ENCODE measurements at regions of chr14 and their contacts with region 1.

Region 1: DNA sequence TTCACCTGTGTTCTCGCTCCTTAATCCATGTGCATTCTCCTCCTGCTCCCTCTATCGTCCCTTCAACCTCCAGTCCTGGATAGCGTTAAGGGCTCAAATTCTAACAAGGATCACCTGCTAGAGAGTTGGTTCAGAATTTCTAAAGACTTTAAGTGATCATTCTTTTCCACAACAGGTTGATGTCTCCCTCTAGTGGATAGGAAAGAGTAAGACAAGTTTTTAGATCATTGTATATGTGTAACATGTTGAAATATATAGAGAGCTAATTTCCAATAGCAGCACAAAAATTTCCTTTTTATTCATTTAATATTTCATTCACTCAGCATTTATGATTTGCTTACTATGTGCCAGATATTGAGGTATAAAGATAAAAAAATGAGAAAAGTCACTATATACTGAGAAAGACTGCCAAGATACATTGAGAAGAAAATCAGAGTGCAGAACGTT is 9.3 kb upstream of the ESR2 start:
- DNase-seq: peak; percentile 70
- ATAC-seq: peak; percentile 69
- H3K4me3 ChIP-seq: no peak overlapping the region
- H3K4me3 Mint-ChIP-seq: no peak overlapping the region
- H3K27ac ChIP-seq: no peak overlapping the region
- H3K27ac Mint-ChIP-seq: no peak overlapping the region
- H3K4me1 ChIP-seq: no peaks in the 10 kb centered on the region
- H3K4me1 Mint-ChIP-seq: peaks cover 2% of the 10 kb centered on the region
- H3K27me3 ChIP-seq: no peaks in the 10 kb centered on the region
- H3K27me3 Mint-ChIP-seq: no peaks in the 10 kb centered on the region
- CTCF ChIP-seq: peak; percentile 94

Region 2: DNA sequence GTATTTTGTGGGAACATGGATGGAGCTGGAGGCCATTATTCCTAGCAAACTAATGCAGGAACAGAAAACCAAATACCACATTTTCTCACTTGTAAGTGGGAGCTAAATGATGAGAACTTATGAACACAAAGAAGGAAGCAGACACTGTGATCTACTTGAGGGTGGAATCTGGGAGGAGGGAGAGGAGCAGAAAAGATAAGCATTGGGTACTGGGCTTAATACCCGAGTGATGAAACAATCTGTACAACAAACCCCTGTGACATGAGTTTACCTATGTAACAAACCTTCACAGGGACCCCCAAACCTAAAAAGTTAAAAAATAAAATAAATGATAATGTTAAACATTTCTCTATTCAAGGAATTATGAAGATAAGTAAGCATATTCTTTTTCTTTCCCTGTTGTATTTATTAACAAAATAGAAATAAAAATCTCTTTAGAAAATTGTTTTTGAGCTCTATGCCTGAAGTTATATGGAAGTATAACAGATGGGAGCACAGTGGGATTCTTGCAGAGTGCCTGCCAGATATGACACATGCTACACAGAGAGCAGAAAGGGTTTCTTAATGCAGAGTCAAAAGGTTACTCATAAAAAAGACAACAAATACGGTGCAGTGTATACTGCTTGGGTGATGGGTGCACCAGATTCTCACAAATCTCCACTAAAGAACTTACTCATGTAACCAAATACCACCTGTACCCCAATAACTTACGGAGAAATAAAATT is 502.7 kb before region 1 on chr14:
- CTCF ChIA-PET with region 1: interaction called, 45 read pairs
- POLR2A ChIA-PET with region 1: no interaction called
- intact Hi-C with region 1: loop called (anchors 1 kb)
- DNase-seq: no peak
- ATAC-seq: no peak
- H3K4me3 ChIP-seq: no peak overlapping the region
- H3K4me3 Mint-ChIP-seq: no peak overlapping the region
- H3K27ac ChIP-seq: no peak overlapping the region
- H3K27ac Mint-ChIP-seq: no peak overlapping the region
- H3K4me1 ChIP-seq: no peaks in the 10 kb centered on the region
- H3K4me1 Mint-ChIP-seq: peaks cover 3% of the 10 kb centered on the region
- H3K27me3 ChIP-seq: no peaks in the 10 kb centered on the region
- H3K27me3 Mint-ChIP-seq: no peaks in the 10 kb centered on the region
- CTCF ChIP-seq: no peak

Region 3: DNA sequence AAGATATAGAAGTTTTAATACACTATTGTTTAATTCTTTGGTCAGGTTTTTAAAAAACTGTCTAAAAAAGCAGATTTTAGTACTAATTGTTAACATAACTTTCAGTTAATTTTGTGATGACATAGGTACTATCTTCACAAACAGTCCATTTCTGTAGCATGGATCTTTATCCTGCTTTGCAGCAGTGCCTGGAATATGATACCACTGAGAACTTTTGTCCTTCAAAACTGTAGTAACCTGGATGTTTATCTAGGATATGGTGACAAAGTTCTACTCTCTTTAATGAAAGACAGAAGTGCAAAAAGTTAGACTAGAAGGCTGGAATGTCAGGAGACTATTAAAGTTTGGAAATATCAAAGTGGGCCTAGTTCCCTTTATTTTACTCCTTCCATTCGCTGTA is 290.8 kb before region 1 on chr14:
- CTCF ChIA-PET with region 1: interaction called, 63 read pairs
- POLR2A ChIA-PET with region 1: no interaction called
- intact Hi-C with region 1: loop called (anchors 1 kb)
- DNase-seq: no peak
- ATAC-seq: no peak
- H3K4me3 ChIP-seq: no peak overlapping the region
- H3K4me3 Mint-ChIP-seq: no peak overlapping the region
- H3K27ac ChIP-seq: no peak overlapping the region
- H3K27ac Mint-ChIP-seq: no peak overlapping the region
- H3K4me1 ChIP-seq: no peaks in the 10 kb centered on the region
- H3K4me1 Mint-ChIP-seq: no peaks in the 10 kb centered on the region
- H3K27me3 ChIP-seq: no peaks in the 10 kb centered on the region
- H3K27me3 Mint-ChIP-seq: no peaks in the 10 kb centered on the region
- CTCF ChIP-seq: no peak

Region 4: DNA sequence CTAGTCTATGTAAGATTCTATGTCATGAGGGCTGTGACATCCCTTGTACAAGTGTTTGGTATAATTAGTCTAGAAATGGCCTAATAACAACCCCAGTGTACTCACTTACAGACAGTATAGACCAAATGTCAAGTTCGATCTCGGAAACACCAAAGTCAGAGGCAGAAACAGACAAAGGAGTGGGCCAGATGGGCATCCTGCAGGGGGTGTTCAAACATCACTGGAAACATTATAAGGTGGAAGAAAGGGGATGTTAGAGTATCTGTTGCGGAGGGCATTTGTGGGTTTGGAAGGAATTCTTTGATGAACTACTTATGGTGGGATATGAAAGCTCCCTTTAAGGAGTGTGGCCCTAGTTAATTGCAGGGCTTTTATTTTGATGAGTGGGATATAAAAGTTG is 143.9 kb before region 1 on chr14:
- CTCF ChIA-PET with region 1: interaction called, 26 read pairs
- POLR2A ChIA-PET with region 1: no interaction called
- intact Hi-C with region 1: loop called (anchors 1 kb)
- DNase-seq: peak; percentile 68
- ATAC-seq: peak; percentile 62
- H3K4me3 ChIP-seq: no peak overlapping the region
- H3K4me3 Mint-ChIP-seq: no peak overlapping the region
- H3K27ac ChIP-seq: no peak overlapping the region
- H3K27ac Mint-ChIP-seq: no peak overlapping the region
- H3K4me1 ChIP-seq: no peaks in the 10 kb centered on the region
- H3K4me1 Mint-ChIP-seq: peaks cover 9% of the 10 kb centered on the region
- H3K27me3 ChIP-seq: no peaks in the 10 kb centered on the region
- H3K27me3 Mint-ChIP-seq: no peaks in the 10 kb centered on the region
- CTCF ChIP-seq: peak; percentile 62

Region 5: GRCh38 chr14:64394977-64395633 is 91.6 kb after region 1 on chr14:
- CTCF ChIA-PET with region 1: no interaction called
- POLR2A ChIA-PET with region 1: no interaction called
- intact Hi-C with region 1: no loop called
- DNase-seq: no peak
- ATAC-seq: no peak
- H3K4me3 ChIP-seq: no peak overlapping the region
- H3K4me3 Mint-ChIP-seq: no peak overlapping the region
- H3K27ac ChIP-seq: no peak overlapping the region
- H3K27ac Mint-ChIP-seq: no peak overlapping the region
- H3K4me1 ChIP-seq: peaks cover 9 to 14% of the 10 kb centered on the region in 2 donors
- H3K4me1 Mint-ChIP-seq: peaks cover 38% of the 10 kb centered on the region
- H3K27me3 ChIP-seq: no peaks in the 10 kb centered on the region
- H3K27me3 Mint-ChIP-seq: no peaks in the 10 kb centered on the region
- CTCF ChIP-seq: no peak

Region 6: DNA sequence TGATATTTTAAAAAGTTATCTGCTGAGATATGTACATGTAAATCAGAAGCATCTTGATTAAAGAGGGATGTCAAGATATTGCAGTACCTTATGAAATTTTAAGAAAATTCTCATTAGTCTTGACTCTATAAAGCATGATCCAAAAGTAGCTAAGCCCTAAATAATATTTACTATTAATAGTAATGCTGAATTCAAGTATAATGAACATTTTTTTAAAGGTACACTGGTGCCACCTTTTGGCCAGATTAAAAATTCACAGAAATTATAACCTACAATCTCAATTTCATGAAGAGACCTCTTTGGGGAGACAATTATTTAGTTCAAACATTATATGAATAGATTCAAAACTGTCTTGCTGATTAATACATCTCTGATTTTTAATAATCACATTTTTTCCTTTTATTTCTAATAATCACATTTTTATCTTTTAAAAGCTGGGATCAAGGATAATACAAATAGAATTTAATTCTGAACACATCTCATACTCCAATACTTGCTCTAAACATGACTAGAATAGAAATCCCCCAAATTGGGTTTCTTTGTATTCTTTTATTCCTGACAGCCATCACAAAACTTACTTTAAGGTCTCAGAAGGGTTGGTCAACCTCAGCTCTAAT is 175.2 kb after region 1 on chr14:
- CTCF ChIA-PET with region 1: interaction called, 31 read pairs
- POLR2A ChIA-PET with region 1: interaction called, 3 read pairs
- intact Hi-C with region 1: no loop called
- DNase-seq: peak; percentile 63
- ATAC-seq: no peak
- H3K4me3 ChIP-seq: no peak overlapping the region
- H3K4me3 Mint-ChIP-seq: no peak overlapping the region
- H3K27ac ChIP-seq: no peak overlapping the region
- H3K27ac Mint-ChIP-seq: no peak overlapping the region
- H3K4me1 ChIP-seq: no peaks in the 10 kb centered on the region
- H3K4me1 Mint-ChIP-seq: peaks cover 3% of the 10 kb centered on the region
- H3K27me3 ChIP-seq: no peaks in the 10 kb centered on the region
- H3K27me3 Mint-ChIP-seq: no peaks in the 10 kb centered on the region
- CTCF ChIP-seq: peak; percentile 85

Measured in B cell (primary cell).